RWPE1 (cell line): ENCODE measurements at regions of chr17 and their contacts with region 1.

Region 1: DNA sequence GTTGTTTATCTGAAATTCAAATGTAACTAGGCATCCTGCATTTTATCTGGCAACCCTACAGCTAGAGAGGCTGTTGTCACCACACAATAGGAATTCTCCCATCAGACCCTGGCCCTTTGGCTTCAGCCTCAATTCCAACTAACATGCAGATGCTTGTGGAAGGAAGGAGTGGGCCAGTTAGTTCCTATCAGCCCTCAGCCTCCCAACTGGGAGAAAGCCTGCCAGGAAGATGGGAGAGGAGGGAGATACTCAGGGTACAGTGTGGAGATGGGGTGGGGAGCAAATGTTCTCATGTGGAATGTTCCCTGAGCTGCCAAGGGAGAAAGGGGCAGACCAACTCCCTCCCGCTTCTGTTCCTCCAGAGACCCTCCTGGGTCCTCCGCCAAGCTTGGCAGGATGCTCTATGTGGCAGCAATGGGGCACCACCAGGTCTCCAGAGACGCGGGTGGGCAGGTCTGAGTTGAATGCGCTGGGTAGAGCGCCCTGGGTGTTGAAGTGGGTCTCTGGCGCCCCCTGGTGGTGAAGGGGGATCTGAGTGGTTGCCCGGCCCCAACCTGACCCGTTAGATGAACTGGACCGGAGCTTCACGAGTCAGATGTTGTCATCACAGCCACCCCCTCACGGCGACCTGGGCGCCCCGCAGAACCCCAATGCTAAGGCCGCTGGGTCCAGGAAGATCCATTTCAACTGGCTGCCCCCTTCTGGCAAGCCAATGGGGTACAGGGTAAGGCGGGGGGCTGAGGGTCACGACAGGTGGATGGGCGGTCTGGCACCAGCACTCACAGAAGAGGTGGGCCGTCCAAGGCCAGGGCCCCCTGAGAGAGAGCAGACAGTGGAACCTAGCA is 15.2 kb downstream of the GALK1 start:
- DNase-seq: peak; percentile 55
- H3K27ac ChIP-seq: peak overlapping the region; percentile 98
- CTCF ChIP-seq: peak; percentile 87

Region 2: GRCh38 chr17:75673487-75673886 is 76.3 kb before region 1 on chr17:
- CTCF ChIA-PET with region 1: interaction called, 18 read pairs
- POLR2A ChIA-PET with region 1: no interaction called
- DNase-seq: no peak
- H3K27ac ChIP-seq: peak overlapping the region; percentile 47
- CTCF ChIP-seq: no peak

Region 3: GRCh38 chr17:75679706-75680442 is 69.9 kb before region 1 on chr17:
- CTCF ChIA-PET with region 1: interaction called, 18 read pairs
- POLR2A ChIA-PET with region 1: no interaction called
- DNase-seq: peak; percentile 49
- H3K27ac ChIP-seq: peak overlapping the region; percentile 100
- CTCF ChIP-seq: no peak; the same call in 1 of the 2 replicates

Region 4: DNA sequence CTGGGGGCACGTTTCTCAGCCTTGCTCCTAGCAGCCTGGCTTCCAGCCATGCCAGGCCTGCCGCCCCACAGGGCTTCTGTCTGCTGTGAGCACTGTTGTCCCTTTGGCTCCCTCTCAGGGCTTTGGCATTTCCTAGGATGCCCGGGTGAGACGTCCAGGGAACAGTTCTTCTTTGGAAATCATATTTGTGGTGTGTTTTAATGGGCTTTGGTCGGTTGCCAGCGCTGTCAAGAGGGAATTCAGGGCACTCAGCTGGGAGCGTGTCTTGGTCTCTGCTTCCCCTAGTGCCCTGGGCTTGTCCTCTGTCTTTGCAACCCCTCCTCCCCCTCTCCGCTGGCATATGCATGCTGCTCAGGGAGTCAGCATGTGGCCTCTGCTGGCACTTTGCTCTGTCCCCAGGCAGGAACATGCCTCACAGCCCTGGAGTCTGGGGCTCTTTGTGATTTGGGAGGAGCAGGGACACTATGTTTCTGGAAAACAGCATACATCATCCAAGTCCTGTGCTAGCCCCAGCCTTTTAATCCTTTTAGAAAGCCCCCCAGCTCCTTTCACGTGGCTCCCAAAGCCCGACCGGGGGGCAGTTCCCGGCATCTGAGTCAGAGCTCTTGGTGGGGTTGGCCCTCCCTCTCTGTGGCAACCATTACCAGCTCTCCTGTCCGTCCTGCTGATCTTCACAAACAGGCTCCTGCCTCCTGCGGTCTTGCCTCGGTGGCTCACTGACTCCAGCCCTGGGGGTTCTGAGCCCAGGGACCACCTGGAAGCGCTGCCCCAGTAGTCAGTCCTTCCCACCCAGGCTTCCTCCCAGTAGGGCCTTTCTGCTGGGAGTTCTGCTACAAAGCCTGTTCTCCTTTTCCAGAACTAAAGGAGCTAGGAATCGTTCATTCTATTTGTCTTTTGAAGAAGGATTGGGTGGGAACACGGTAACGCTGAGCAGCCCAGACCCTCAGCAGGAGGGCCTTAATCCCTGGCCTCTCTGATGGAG is 56.0 kb before region 1 on chr17:
- CTCF ChIA-PET with region 1: interaction called, 10 read pairs
- POLR2A ChIA-PET with region 1: no interaction called
- DNase-seq: peak; percentile 63
- H3K27ac ChIP-seq: peak overlapping the region; percentile 100
- CTCF ChIP-seq: no peak; the same call in 1 of the 2 replicates

Region 5: DNA sequence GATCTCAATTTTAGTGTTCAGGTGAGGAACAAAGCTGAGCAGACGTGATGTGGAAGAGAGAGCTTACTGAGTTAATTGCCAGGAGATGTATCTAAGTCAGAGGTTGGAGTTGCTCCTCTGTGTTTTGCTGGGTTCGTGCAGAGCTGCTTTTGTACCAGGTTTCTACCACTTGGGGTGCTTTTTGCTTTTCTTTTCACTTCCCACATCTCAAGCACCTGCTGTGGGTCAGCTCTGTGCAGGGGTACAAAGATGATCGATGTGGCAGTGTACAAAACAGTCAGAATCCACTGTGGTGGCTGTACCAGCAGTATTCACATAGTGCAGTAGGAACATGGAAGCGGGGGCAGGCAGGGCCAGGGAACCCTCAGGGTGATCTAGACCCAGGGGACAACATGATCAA is 49.6 kb after region 1 on chr17:
- CTCF ChIA-PET with region 1: interaction called, 12 read pairs
- POLR2A ChIA-PET with region 1: interaction called, 3 read pairs
- DNase-seq: no peak
- H3K27ac ChIP-seq: peak overlapping the region; percentile 6; the same call in 1 of the 2 replicates
- CTCF ChIP-seq: no peak

Region 6: DNA sequence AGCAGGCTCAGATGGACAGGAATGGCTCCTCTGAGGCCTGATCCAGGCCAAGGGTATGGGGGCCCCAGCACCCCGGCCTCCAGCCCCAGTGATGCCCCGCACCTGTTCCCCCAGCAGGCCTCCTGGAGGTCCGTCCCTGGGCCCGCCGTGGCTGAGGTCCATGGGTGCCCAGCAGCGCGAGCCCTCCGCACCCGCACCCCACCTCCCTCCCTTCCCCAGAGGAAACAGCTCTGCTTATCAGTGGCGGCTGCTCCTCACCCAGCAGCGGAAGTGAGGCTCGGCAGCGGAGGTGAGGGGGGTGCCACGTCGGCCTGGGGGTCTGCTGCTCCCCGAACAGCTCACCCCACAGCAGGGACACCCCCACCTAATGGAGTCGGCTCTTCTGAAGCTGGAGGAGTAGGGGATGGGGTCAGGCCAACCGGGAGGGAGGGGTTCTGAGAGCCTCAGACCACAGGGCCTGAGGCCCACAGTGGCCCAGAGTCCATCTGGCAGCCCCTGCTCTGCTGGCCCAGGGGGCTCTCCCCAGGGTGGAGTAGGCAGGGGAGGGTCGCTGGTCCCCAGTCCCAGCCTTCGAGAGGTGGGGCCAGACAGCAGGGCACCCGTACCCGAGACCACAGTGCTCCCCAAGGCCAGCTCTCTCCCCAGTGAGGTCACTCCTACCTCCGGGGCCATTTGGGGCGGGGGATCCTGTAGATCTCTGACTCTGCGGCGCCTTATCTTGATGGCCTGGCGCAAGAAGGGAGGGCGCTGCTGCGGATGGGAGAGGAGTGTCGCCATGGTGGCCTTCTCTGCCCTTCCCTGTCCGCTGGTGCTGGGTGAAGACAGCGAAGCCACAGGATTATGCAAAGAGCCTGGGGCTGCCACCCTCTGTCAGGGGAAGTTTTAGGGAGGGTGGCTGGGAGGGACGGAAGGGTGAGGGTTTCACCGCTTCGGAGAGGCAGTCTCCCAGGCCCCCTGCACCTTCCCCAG is 94.1 kb after region 1 on chr17 and contains the start of gene UNC13D:
- CTCF ChIA-PET with region 1: no interaction called
- POLR2A ChIA-PET with region 1: no interaction called
- DNase-seq: no peak
- H3K27ac ChIP-seq: peak within 1 kb of the TSS; percentile 92
- CTCF ChIP-seq: no peak